Caco-2 (cell line): ENCODE measurements at regions of chr11 and their contacts with region 1.

Region 1: GRCh38 chr11:57144075-57144474 is 37.7 kb upstream of the LRRC55 start:
- DNase-seq: peak in 1 of 2 experiments; percentile 36
- H3K4me3 ChIP-seq: no peak overlapping the region
- H3K4me3 Mint-ChIP-seq: no peak overlapping the region
- H3K27ac Mint-ChIP-seq: no peak overlapping the region
- H3K4me1 ChIP-seq: no peaks in the 10 kb centered on the region; the same call in 1 of the 2 replicates
- H3K4me1 Mint-ChIP-seq: no peaks in the 10 kb centered on the region
- H3K27me3 ChIP-seq: no peaks in the 10 kb centered on the region
- H3K27me3 Mint-ChIP-seq: peaks cover 9% of the 10 kb centered on the region
- CTCF ChIP-seq: no peak

Region 2: GRCh38 chr11:57180081-57180561 is 36.0 kb after region 1 on chr11:
- CTCF ChIA-PET with region 1: no interaction called
- POLR2A ChIA-PET with region 1: no interaction called
- intact Hi-C with region 1: loop called (anchors 5 kb)
- DNase-seq: no peak
- H3K4me3 ChIP-seq: no peak overlapping the region
- H3K4me3 Mint-ChIP-seq: no peak overlapping the region
- H3K27ac Mint-ChIP-seq: no peak overlapping the region
- H3K4me1 ChIP-seq: no peaks in the 10 kb centered on the region
- H3K4me1 Mint-ChIP-seq: no peaks in the 10 kb centered on the region
- H3K27me3 ChIP-seq: no peaks in the 10 kb centered on the region
- H3K27me3 Mint-ChIP-seq: peaks cover 16% of the 10 kb centered on the region
- CTCF ChIP-seq: no peak